PC-3 (cell line): ENCODE measurements at regions of chr5 and their contacts with region 1.

Region 1: GRCh38 chr5:40477856-40478546 is 201.7 kb upstream of the PTGER4 start:
- DNase-seq: peak; percentile 96
- ATAC-seq: peak; percentile 86
- H3K4me3 ChIP-seq: no peak overlapping the region; the same call in 1 of the 2 replicates
- H3K27ac ChIP-seq: peak overlapping the region; percentile 37
- H3K4me1 ChIP-seq: peaks cover 31% of the 10 kb centered on the region
- H3K27me3 ChIP-seq: no peaks in the 10 kb centered on the region
- CTCF ChIP-seq: no peak

Region 2: GRCh38 chr5:39121315-39121714 is 1356.7 kb before region 1 on chr5:
- CTCF ChIA-PET with region 1: no interaction called
- POLR2A ChIA-PET with region 1: no interaction called
- intact Hi-C with region 1: no loop called
- DNase-seq: peak; percentile 62
- ATAC-seq: peak; percentile 60
- H3K4me3 ChIP-seq: no peak overlapping the region
- H3K27ac ChIP-seq: peak overlapping the region; percentile 72
- H3K4me1 ChIP-seq: peaks cover 59% of the 10 kb centered on the region
- H3K27me3 ChIP-seq: no peaks in the 10 kb centered on the region
- CTCF ChIP-seq: no peak

Region 3: GRCh38 chr5:40410231-40410861 is 67.7 kb before region 1 on chr5:
- CTCF ChIA-PET with region 1: no interaction called
- POLR2A ChIA-PET with region 1: no interaction called
- intact Hi-C with region 1: loop called (anchors 1 kb)
- DNase-seq: peak; percentile 71
- ATAC-seq: peak; percentile 6; the same call in 1 of the 2 replicates
- H3K4me3 ChIP-seq: peak overlapping the region; percentile 23
- H3K27ac ChIP-seq: peak overlapping the region; percentile 90
- H3K4me1 ChIP-seq: peaks cover 34% of the 10 kb centered on the region
- H3K27me3 ChIP-seq: no peaks in the 10 kb centered on the region
- CTCF ChIP-seq: no peak

Region 4: DNA sequence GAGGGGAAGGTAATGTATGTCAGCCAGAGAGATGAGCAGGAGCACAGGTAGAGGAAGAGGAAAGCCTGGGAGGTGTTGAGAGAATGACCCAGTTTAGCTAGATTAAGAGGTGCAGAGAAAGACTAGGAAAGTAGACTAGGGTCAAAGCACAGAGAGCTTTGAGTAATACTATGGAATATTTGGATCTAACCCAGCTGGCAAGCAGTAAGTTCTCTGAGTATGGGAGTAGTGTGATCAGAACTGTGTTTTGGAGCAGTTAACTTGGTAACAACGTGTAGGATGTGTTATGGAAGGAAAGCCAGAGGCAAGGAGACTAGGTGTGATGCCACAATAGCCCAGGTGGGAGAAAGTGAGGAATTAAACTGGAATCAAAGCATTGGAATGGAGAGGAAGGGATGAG is 116.8 kb after region 1 on chr5:
- CTCF ChIA-PET with region 1: no interaction called
- POLR2A ChIA-PET with region 1: no interaction called
- intact Hi-C with region 1: no loop called
- DNase-seq: peak; percentile 18
- ATAC-seq: no peak
- H3K4me3 ChIP-seq: no peak overlapping the region
- H3K27ac ChIP-seq: no peak overlapping the region
- H3K4me1 ChIP-seq: no peaks in the 10 kb centered on the region
- H3K27me3 ChIP-seq: no peaks in the 10 kb centered on the region
- CTCF ChIP-seq: no peak

Region 5: DNA sequence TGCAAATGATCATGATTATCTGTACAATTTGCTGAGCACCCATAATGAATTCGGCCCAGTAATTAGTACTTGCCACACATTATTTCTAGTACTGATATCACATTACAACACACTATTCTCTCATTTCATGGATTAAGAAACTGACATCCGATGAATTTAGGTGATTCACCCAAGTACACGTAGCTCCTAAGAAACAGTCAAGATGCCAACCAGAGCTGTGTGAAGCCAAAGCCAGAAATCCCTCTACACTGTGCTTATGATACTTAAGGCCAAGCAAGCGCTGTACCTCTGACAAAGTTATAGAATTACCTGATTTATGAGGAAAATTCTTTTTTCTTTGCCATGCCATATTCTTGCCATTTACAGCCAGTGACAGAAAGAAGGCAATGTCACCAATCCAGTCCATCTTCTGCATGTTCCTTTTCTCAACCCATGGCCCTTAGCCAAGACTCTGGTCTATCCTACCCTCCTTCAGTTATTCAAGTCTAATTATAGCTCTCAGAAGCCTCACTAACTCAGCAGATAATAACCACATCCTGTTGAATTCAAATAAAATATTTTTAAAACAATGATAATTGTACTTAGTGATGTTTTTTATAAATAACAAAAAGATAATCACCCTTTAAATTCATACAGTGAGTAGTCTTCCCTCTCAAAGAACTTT is 127.4 kb after region 1 on chr5:
- CTCF ChIA-PET with region 1: no interaction called
- POLR2A ChIA-PET with region 1: no interaction called
- intact Hi-C with region 1: no loop called
- DNase-seq: peak; percentile 16
- ATAC-seq: no peak
- H3K4me3 ChIP-seq: no peak overlapping the region
- H3K27ac ChIP-seq: no peak overlapping the region
- H3K4me1 ChIP-seq: peaks cover 9% of the 10 kb centered on the region; the same call in 1 of the 2 replicates
- H3K27me3 ChIP-seq: no peaks in the 10 kb centered on the region
- CTCF ChIP-seq: no peak